Naive thymus-derived CD8-positive, alpha-beta T cell (primary cell): ENCODE measurements at regions of chr16 and their contacts with region 1.

Region 1: GRCh38 chr16:85126705-85127419 is 14.6 kb upstream of the CIBAR2 start:
- DNase-seq: no peak
- ATAC-seq: no peak
- H3K4me3 Mint-ChIP-seq: no peak overlapping the region
- H3K27ac Mint-ChIP-seq: no peak overlapping the region
- H3K4me1 Mint-ChIP-seq: peaks cover 0 to 11% (median 4%) of the 10 kb centered on the region in 4 donors
- H3K27me3 Mint-ChIP-seq: peaks cover 0 to 2% (median 0%) of the 10 kb centered on the region in 5 donors

Region 2: GRCh38 chr16:85114909-85115567 is 11.8 kb before region 1 on chr16:
- POLR2A ChIA-PET with region 1: no interaction called
- DNase-seq: peak; percentile 55 to 83 (median 72)
- ATAC-seq: peak; percentile 89 to 96
- H3K4me3 Mint-ChIP-seq: peak overlapping the region; percentile 58 to 86 (median 79)
- H3K27ac Mint-ChIP-seq: peak overlapping the region; percentile 38 to 89 (median 72)
- H3K4me1 Mint-ChIP-seq: peaks cover 7 to 12% (median 9%) of the 10 kb centered on the region in 4 donors
- H3K27me3 Mint-ChIP-seq: no peaks in the 10 kb centered on the region

Region 3: DNA sequence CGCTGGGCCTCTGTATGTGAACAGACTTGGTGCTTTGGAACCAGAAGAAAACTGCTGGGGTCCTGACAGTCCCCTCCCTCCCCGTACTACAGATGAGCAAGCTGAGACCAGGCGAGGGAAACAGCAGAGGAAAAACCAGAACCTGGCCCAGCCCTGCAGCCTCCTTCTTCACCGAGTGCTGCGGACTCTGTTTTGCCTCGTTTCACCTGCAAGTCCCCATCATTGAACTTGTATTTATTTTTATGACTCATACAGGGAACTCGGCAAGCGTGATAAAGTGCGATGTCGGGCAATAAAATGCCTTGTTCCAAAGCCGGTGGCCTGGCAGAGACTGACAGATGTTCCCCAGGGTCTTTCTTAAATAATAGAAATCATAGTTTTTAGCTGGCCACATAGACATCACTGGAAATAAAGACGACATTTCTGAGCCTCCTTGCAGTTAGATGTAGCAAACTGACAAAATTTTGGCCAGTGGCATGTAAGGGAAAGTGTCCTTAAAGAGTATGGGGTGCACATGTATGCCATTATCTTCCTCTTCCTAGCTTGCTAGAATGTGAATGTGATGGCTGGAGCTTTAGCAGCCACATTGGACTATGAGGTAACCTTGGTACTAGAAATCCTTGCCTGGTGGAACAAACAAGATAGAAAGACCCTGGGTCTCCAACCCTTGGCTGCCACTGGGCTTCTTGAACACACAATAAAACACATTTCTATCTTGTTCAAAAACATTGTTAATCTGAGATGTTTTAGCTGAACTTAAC is 900.7 kb after region 1 on chr16:
- POLR2A ChIA-PET with region 1: interaction called, 10 read pairs
- DNase-seq: no peak
- ATAC-seq: no peak
- H3K4me3 Mint-ChIP-seq: no peak overlapping the region
- H3K27ac Mint-ChIP-seq: no peak overlapping the region
- H3K4me1 Mint-ChIP-seq: peaks cover 0 to 3% (median 0%) of the 10 kb centered on the region in 4 donors
- H3K27me3 Mint-ChIP-seq: peaks cover 5 to 25% (median 15%) of the 10 kb centered on the region in 5 donors